GM12878 (cell line): ENCODE measurements at regions of chr19 and their contacts with region 1.

Region 1: DNA sequence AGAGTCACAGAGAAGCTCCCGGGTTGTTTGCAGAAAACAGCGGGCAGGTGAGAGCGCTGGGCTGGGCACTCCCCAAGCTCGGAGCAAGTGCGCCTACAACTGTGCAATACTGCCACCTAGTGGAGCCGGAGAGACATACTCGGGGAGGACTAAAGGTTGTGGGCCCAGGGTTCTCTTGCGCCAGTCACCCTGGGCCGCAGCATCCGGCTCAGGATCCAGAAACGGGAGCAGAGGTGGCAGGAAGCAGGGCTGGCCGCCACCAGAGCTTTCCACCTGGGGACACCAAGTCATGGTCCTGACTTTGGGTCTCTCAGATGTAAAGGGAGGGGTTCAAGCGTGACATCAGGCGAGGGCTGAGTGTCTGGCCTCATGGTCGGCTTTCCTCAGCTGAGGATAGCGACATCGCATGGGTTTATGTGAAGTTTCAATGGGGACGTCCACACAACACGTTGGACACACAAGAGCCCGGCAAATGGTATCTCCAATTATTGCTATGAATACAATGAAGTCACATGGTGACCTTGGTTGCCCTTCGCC is 11.2 kb upstream of the KLK4 start:
- DNase-seq: peak; percentile 27
- ATAC-seq: peak; percentile 100
- H3K4me3 ChIP-seq: no peak overlapping the region
- H3K27ac ChIP-seq: no peak overlapping the region
- H3K4me1 ChIP-seq: no peaks in the 10 kb centered on the region
- H3K27me3 ChIP-seq: no peaks in the 10 kb centered on the region
- CTCF ChIP-seq: peak; percentile 82 to 95 (median 85); a peak in 5 of 6 replicates
- EP300 ChIP-seq: no peak
- POLR2A ChIP-seq: no peak
- RAD21 ChIP-seq: peak; percentile 93

Region 2: DNA sequence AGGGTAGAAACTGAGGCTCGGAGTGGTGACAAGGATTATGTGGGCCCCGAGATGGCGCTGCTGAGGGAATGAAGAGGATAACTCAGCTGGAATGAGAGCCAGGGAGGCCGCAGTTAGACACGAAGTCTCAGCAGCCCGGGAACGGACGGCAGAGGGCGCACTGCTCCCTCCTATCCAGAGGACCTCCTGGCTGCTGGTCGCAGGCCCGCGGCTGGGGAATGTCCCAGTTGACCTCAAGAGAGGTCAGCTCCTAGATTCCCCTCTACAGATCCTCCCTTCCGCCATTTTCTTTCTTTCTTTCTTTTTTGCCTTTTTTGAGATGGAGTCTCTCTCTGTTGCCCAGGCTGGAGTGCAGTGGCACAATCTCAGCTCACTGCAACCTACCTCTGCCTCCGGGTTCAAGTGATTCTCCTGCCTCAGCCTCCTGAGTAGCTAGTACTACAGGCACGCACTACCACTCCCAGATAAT is 384.6 kb before region 1 on chr19:
- CTCF ChIA-PET with region 1: interaction called, 29 read pairs
- POLR2A ChIA-PET with region 1: interaction called, 6 read pairs
- RAD21 ChIA-PET with region 1: interaction called, 9 read pairs
- SMC1A ChIA-PET with region 1: interaction called, 5 read pairs
- in situ Hi-C with region 1: loop called (anchors 10 kb)
- intact Hi-C with region 1: loop called (anchors 1 kb)
- DNase-seq: no peak
- ATAC-seq: peak; percentile 88
- H3K4me3 ChIP-seq: no peak overlapping the region
- H3K27ac ChIP-seq: no peak overlapping the region
- H3K4me1 ChIP-seq: peaks cover 8% of the 10 kb centered on the region
- H3K27me3 ChIP-seq: no peaks in the 10 kb centered on the region
- CTCF ChIP-seq: peak; percentile 77 to 83 (median 82)
- EP300 ChIP-seq: no peak
- POLR2A ChIP-seq: no peak
- RAD21 ChIP-seq: peak; percentile 58

Region 3: GRCh38 chr19:50785329-50785728 is 137.1 kb before region 1 on chr19:
- CTCF ChIA-PET with region 1: interaction called, 39 read pairs
- POLR2A ChIA-PET with region 1: no interaction called
- RAD21 ChIA-PET with region 1: interaction called, 24 read pairs
- SMC1A ChIA-PET with region 1: interaction called, 22 read pairs
- in situ Hi-C with region 1: no loop called
- intact Hi-C with region 1: no loop called
- DNase-seq: no peak
- ATAC-seq: no peak
- H3K4me3 ChIP-seq: no peak overlapping the region
- H3K27ac ChIP-seq: no peak overlapping the region
- H3K4me1 ChIP-seq: no peaks in the 10 kb centered on the region; the same call in 1 of the 2 replicates
- H3K27me3 ChIP-seq: no peaks in the 10 kb centered on the region
- CTCF ChIP-seq: no peak
- EP300 ChIP-seq: no peak
- POLR2A ChIP-seq: no peak
- RAD21 ChIP-seq: no peak

Region 4: GRCh38 chr19:50817941-50818858 is 104.2 kb before region 1 on chr19:
- CTCF ChIA-PET with region 1: interaction called, 5 read pairs
- POLR2A ChIA-PET with region 1: no interaction called
- RAD21 ChIA-PET with region 1: interaction called, 10 read pairs
- SMC1A ChIA-PET with region 1: interaction called, 7 read pairs
- in situ Hi-C with region 1: no loop called
- intact Hi-C with region 1: no loop called
- DNase-seq: peak; percentile 63
- ATAC-seq: peak; percentile 87
- H3K4me3 ChIP-seq: peak overlapping the region; percentile 97
- H3K27ac ChIP-seq: peak overlapping the region; percentile 93
- H3K4me1 ChIP-seq: peaks cover 36% of the 10 kb centered on the region
- H3K27me3 ChIP-seq: no peaks in the 10 kb centered on the region
- CTCF ChIP-seq: no peak
- EP300 ChIP-seq: no peak
- POLR2A ChIP-seq: peak; percentile 67; the same call in 1 of the 2 replicates
- RAD21 ChIP-seq: no peak

Region 5: GRCh38 chr19:50882183-50882582 is 40.2 kb before region 1 on chr19:
- CTCF ChIA-PET with region 1: interaction called, 24 read pairs
- POLR2A ChIA-PET with region 1: no interaction called
- RAD21 ChIA-PET with region 1: interaction called, 8 read pairs
- SMC1A ChIA-PET with region 1: no interaction called
- in situ Hi-C with region 1: no loop called
- intact Hi-C with region 1: no loop called
- DNase-seq: no peak
- ATAC-seq: no peak
- H3K4me3 ChIP-seq: no peak overlapping the region
- H3K27ac ChIP-seq: no peak overlapping the region
- H3K4me1 ChIP-seq: peaks cover 9% of the 10 kb centered on the region; the same call in 1 of the 2 replicates
- H3K27me3 ChIP-seq: no peaks in the 10 kb centered on the region
- CTCF ChIP-seq: peak in 2 of 3 experiments; percentile 8 to 17; a peak in 1 of 6 replicates
- EP300 ChIP-seq: no peak
- POLR2A ChIP-seq: no peak
- RAD21 ChIP-seq: no peak; the same call in 1 of the 2 replicates

Region 6: GRCh38 chr19:50933640-50934039 is 11.3 kb after region 1 on chr19:
- CTCF ChIA-PET with region 1: interaction called, 11 read pairs
- POLR2A ChIA-PET with region 1: no interaction called
- RAD21 ChIA-PET with region 1: no interaction called
- SMC1A ChIA-PET with region 1: interaction called, 4 read pairs
- in situ Hi-C with region 1: no loop called
- intact Hi-C with region 1: no loop called
- DNase-seq: no peak
- ATAC-seq: no peak
- H3K4me3 ChIP-seq: no peak overlapping the region
- H3K27ac ChIP-seq: no peak overlapping the region
- H3K4me1 ChIP-seq: no peaks in the 10 kb centered on the region
- H3K27me3 ChIP-seq: no peaks in the 10 kb centered on the region
- CTCF ChIP-seq: no peak
- EP300 ChIP-seq: no peak
- POLR2A ChIP-seq: no peak
- RAD21 ChIP-seq: no peak

Region 7: GRCh38 chr19:50994129-50994528 is 71.7 kb after region 1 on chr19:
- CTCF ChIA-PET with region 1: no interaction called
- POLR2A ChIA-PET with region 1: no interaction called
- RAD21 ChIA-PET with region 1: no interaction called
- SMC1A ChIA-PET with region 1: no interaction called
- in situ Hi-C with region 1: no loop called
- intact Hi-C with region 1: no loop called
- DNase-seq: peak; percentile 2
- ATAC-seq: no peak
- H3K4me3 ChIP-seq: no peak overlapping the region
- H3K27ac ChIP-seq: no peak overlapping the region
- H3K4me1 ChIP-seq: no peaks in the 10 kb centered on the region
- H3K27me3 ChIP-seq: no peaks in the 10 kb centered on the region; a peak in 2 of 4 replicates
- CTCF ChIP-seq: no peak
- EP300 ChIP-seq: no peak
- POLR2A ChIP-seq: no peak
- RAD21 ChIP-seq: no peak